ENCODE measurements at regions of chr20 and their contacts with region 1.

Region 1: DNA sequence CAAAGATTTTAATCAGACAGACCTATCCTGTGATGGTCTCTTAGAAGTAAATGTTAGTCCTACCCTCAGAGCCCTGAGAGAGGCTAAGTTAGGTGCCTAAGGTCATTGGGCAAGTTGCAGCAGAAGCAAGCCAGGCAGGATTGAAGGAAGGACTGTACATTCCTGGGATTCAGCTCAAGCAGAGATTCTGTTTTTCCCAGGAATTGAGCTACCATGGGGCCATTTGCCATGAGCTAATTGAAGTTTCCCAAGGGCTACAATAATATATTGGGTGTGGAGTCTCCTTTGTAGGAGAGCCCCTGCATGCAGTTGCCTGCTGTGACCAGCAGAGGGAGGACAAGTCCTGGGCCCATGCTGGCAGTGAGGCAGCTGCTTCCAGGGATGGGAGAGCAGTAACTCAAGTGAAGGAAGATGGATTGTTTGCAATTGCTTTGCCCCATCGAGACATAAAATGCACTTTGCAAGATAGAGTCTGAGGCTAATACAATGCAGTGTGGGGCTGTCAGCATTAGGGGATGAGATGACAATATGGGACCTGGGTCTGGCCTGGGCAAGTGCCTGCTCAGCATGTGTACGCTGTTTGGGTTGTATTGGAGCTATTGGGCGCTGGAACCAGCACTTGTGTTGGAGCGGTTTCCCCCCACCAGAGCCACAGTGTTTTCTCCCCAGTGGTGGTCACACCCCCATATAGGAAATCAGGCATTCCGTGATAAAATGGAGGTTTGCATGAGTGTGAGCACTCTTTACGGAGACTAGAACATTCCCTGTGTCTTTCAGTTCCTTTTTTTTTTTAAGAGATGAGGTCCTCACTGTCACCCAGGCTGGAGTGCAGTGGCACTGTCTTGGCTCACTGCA is 27.9 kb downstream of the DNMT3B start:
- DNase-seq: peak; percentile 57

Region 2: GRCh38 chr20:32585011-32585518 is 205.1 kb before region 1 on chr20 and contains the start of gene NOL4L:
- in situ Hi-C with region 1: no loop called
- DNase-seq: peak; percentile 6

Region 3: GRCh38 chr20:32664678-32665159 is 125.4 kb before region 1 on chr20:
- in situ Hi-C with region 1: no loop called
- DNase-seq: no peak

Region 4: DNA sequence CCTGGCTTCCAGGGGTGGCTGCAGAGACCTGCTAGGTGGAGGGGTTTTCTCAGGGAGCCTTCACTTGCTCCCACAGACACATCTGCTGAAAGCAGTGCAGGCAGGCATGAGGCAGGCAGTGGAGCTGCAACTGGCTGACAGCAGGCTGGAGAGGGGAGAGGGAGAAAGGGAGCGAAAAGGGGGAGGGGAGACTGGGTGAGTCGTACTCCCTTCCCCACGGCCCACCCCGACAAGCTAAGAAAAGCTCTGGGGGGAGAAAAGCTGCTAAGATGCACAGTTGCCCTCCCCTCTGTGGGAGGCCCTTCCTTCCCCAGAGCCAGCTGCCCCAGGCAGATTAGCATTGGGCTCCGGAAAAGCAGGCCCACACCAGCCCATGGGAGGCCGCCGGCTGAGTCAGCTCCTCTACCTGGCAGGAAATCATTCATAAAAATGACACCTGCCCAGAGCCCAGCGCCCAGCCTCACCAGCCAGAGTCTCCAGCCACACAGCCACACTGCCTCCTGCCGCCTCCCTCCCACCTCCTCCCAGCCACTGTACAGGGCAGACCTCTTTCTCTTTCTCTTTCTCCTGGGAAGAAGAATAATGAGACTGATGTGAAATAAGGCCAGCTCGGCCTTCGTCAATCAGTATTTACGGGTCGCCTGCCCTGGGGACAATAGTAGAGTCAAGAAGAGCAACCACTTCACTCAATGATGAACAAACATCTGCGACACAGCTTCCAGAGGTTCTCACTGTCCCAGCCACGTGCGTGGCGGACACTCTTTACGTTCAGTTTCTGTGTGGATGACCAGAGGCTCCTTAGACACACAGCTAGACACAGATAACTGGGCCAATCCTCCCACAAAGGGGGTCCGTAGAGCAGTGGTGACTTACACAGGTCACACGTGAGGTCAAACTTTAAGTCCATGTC is 108.7 kb before region 1 on chr20:
- in situ Hi-C with region 1: loop called (anchors 25 kb)
- DNase-seq: no peak

Measured in ACHN (cell line).